Panc1 (cell line): ENCODE measurements at regions of chr17 and their contacts with region 1.

Region 1: GRCh38 chr17:20805751-20806150 is 226.2 kb downstream of the CDRT15L2 start:
- DNase-seq: no peak
- ATAC-seq: no peak
- H3K4me3 ChIP-seq: no peak overlapping the region
- H3K27ac ChIP-seq: no peak overlapping the region
- H3K4me1 ChIP-seq: no peaks in the 10 kb centered on the region
- H3K27me3 ChIP-seq: no peaks in the 10 kb centered on the region
- CTCF ChIP-seq: no peak

Region 2: DNA sequence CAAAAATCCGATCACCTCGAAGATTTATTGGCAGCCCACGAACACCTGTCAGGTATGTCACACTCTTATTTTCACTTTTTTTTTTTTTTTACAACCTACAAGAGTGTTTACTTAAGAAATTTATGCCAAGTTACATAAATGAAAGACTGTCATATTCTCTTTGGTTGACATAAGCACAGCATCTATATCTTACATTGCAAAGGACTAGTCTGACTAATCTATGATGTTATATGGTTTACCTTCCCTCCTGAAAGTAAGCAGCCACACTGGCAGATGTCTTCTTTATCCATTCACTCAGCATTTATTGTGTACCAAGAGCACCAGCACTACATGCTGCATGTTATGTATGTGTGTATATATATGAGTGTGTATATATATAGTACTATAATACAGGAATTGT is 70.0 kb before region 1 on chr17:
- CTCF ChIA-PET with region 1: no interaction called
- POLR2A ChIA-PET with region 1: no interaction called
- in situ Hi-C with region 1: no loop called
- intact Hi-C with region 1: no loop called
- DNase-seq: no peak
- ATAC-seq: no peak
- H3K4me3 ChIP-seq: no peak overlapping the region
- H3K27ac ChIP-seq: no peak overlapping the region
- H3K4me1 ChIP-seq: no peaks in the 10 kb centered on the region
- H3K27me3 ChIP-seq: peaks cover 2% of the 10 kb centered on the region; the same call in 1 of the 2 replicates
- CTCF ChIP-seq: no peak

Region 3: GRCh38 chr17:20779521-20779920 is 26.2 kb before region 1 on chr17:
- CTCF ChIA-PET with region 1: no interaction called
- POLR2A ChIA-PET with region 1: interaction called, 17 read pairs
- in situ Hi-C with region 1: no loop called
- intact Hi-C with region 1: no loop called
- DNase-seq: no peak
- ATAC-seq: no peak
- H3K4me3 ChIP-seq: no peak overlapping the region
- H3K27ac ChIP-seq: no peak overlapping the region
- H3K4me1 ChIP-seq: no peaks in the 10 kb centered on the region
- H3K27me3 ChIP-seq: no peaks in the 10 kb centered on the region
- CTCF ChIP-seq: no peak

Region 4: GRCh38 chr17:21304091-21304490 is 498.3 kb after region 1 on chr17:
- CTCF ChIA-PET with region 1: no interaction called
- POLR2A ChIA-PET with region 1: no interaction called
- in situ Hi-C with region 1: no loop called
- intact Hi-C with region 1: no loop called
- DNase-seq: no peak
- ATAC-seq: no peak
- H3K4me3 ChIP-seq: no peak overlapping the region
- H3K27ac ChIP-seq: no peak overlapping the region
- H3K4me1 ChIP-seq: no peaks in the 10 kb centered on the region
- H3K27me3 ChIP-seq: no peaks in the 10 kb centered on the region
- CTCF ChIP-seq: no peak